Right lobe of liver (tissue), 6 donors: ENCODE measurements at regions of chr16 and their contacts with region 1.

Region 1: GRCh38 chr16:8660841-8661301 is 13.5 kb upstream of the ABAT start:
- DNase-seq: peak; percentile 67 to 75 (median 70)
- ATAC-seq: peak; percentile 94 to 99 (median 98)
- H3K4me3 ChIP-seq: no peak overlapping the region
- H3K27ac ChIP-seq: no peak overlapping the region
- H3K4me1 ChIP-seq: no peaks in the 10 kb centered on the region
- H3K27me3 ChIP-seq: no peaks in the 10 kb centered on the region
- CTCF ChIP-seq: peak; percentile 52 to 88 (median 75)
- POLR2A ChIP-seq: no peak

Region 2: GRCh38 chr16:8217201-8217600 is 443.7 kb before region 1 on chr16:
- intact Hi-C with region 1: no loop called
- DNase-seq: no peak
- ATAC-seq: no peak
- H3K4me3 ChIP-seq: no peak overlapping the region
- H3K27ac ChIP-seq: no peak overlapping the region
- H3K4me1 ChIP-seq: no peaks in the 10 kb centered on the region
- H3K27me3 ChIP-seq: no peaks in the 10 kb centered on the region
- CTCF ChIP-seq: no peak
- POLR2A ChIP-seq: no peak

Region 3: DNA sequence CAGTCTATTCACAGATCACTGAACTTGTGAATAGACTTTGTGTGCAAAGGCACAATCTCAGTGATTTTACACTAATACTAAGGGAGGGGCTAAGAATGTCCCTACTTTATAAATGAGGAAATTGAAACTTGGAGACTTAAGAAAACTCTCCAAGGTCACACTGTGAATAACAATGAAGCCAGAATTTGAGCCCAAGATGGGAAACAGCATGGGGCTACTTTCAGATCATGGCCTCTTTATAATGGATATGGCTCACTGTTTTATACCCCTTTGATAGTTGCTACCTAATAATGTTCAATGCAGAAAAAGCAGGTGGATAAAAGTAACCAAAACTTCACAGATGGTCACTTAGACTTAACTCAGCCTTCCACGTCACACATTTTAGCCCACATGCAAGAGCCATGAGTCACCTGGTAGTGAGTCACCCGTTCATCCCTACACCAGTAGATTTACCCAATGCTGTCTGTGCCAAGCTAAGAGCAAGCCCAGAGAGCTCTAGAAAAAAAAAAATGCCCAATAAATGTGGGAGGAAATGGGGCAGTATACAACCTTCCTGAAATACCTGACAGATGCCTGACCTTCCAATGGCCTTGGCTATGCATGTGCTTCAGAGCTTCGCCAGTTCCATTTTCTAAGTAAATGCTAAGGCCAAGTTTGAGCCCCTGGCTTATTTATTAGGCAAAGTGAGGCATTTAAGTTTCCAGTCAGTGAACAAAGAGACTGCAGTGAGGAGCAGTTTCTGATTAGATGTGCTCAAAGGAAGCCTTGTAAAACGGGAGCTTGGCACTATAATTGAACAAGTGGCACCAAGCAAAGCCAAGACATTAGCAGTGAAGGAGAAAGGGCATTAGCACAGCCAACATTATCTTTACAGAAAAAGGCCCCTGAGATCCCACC is 290.2 kb before region 1 on chr16:
- intact Hi-C with region 1: no loop called
- DNase-seq: no peak
- ATAC-seq: peak in 1 of 4 donors; percentile 59
- H3K4me3 ChIP-seq: no peak overlapping the region
- H3K27ac ChIP-seq: no peak overlapping the region
- H3K4me1 ChIP-seq: no peaks in the 10 kb centered on the region
- H3K27me3 ChIP-seq: no peaks in the 10 kb centered on the region
- CTCF ChIP-seq: no peak
- POLR2A ChIP-seq: no peak

Region 4: GRCh38 chr16:8788578-8789172 is 127.8 kb after region 1 on chr16:
- intact Hi-C with region 1: loop called (anchors 10 kb)
- DNase-seq: peak in 1 of 3 donors; percentile 73
- ATAC-seq: peak; percentile 77 to 86 (median 82)
- H3K4me3 ChIP-seq: no peak overlapping the region
- H3K27ac ChIP-seq: peak overlapping the region in 2 of 3 donors; percentile 60 to 63
- H3K4me1 ChIP-seq: peaks cover 0 to 21% (median 8%) of the 10 kb centered on the region in 4 donors
- H3K27me3 ChIP-seq: no peaks in the 10 kb centered on the region
- CTCF ChIP-seq: no peak
- POLR2A ChIP-seq: no peak